ENCODE measurements at regions of chr6 and their contacts with region 1.

Region 1: GRCh38 chr6:151765444-151765886 is 42.0 kb upstream of the ESR1 start:
- DNase-seq: no peak
- ATAC-seq: peak; percentile 76

Region 2: GRCh38 chr6:152117156-152118133 is 352.0 kb after region 1 on chr6:
- intact Hi-C with region 1: loop called (anchors 5 kb)
- DNase-seq: no peak
- ATAC-seq: no peak

Region 3: DNA sequence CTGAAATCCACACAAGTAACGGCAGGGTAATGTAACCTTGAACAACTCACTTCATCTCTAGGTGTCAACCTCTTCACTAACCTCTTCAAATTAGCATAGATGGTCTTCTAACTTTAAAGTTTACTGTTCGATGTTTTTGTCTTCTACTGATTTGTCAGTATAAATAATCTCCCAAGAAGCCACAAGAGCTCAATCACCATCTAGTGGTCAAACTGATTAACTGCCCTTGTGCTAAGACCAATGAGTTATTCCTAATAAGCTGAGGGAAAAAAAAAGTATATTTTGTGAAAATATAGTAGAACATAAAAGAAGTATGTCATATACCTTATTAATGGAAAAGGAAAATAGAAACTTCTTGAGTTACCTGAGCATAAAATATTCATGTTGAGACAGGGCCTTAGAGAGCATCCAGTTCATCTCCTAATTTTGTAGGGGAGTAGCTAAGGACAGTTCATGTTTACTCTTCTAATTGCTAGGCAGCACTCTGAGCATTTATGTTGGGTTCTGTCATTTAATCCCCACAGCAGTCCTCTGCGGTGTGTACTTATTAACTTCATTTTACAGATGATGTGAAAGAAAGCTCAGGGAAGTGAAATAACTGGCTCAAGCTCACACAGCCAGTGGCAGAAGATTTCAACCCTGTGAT is 359.1 kb after region 1 on chr6:
- intact Hi-C with region 1: loop called (anchors 5 kb)
- DNase-seq: no peak
- ATAC-seq: peak; percentile 54